MCF 10A (cell line): ENCODE measurements at regions of chr17 and their contacts with region 1.

Region 1: GRCh38 chr17:31318298-31318801 is 3.1 kb downstream of the EVI2A start:
- DNase-seq: peak; percentile 92
- H3K4me3 Mint-ChIP-seq: peak overlapping the region; percentile 65
- H3K27ac Mint-ChIP-seq: peak overlapping the region; percentile 90
- H3K4me1 Mint-ChIP-seq: peaks cover 27% of the 10 kb centered on the region
- H3K27me3 Mint-ChIP-seq: no peaks in the 10 kb centered on the region
- CTCF ChIP-seq: no peak

Region 2: GRCh38 chr17:31015639-31016038 is 302.7 kb before region 1 on chr17:
- CTCF ChIA-PET with region 1: no interaction called
- POLR2A ChIA-PET with region 1: no interaction called
- intact Hi-C with region 1: no loop called
- DNase-seq: no peak
- H3K4me3 Mint-ChIP-seq: no peak overlapping the region
- H3K27ac Mint-ChIP-seq: no peak overlapping the region
- H3K4me1 Mint-ChIP-seq: peaks cover 4% of the 10 kb centered on the region
- H3K27me3 Mint-ChIP-seq: no peaks in the 10 kb centered on the region
- CTCF ChIP-seq: no peak

Region 3: GRCh38 chr17:31269578-31269983 is 48.8 kb before region 1 on chr17:
- CTCF ChIA-PET with region 1: no interaction called
- POLR2A ChIA-PET with region 1: interaction called, 27 read pairs
- intact Hi-C with region 1: loop called (anchors 2 kb)
- DNase-seq: peak; percentile 89
- H3K4me3 Mint-ChIP-seq: peak overlapping the region; percentile 38
- H3K27ac Mint-ChIP-seq: peak overlapping the region; percentile 52
- H3K4me1 Mint-ChIP-seq: peaks cover 39% of the 10 kb centered on the region
- H3K27me3 Mint-ChIP-seq: no peaks in the 10 kb centered on the region
- CTCF ChIP-seq: no peak

Region 4: GRCh38 chr17:31339906-31340661 is 21.7 kb after region 1 on chr17:
- CTCF ChIA-PET with region 1: no interaction called
- POLR2A ChIA-PET with region 1: interaction called, 45 read pairs
- intact Hi-C with region 1: no loop called
- DNase-seq: peak; percentile 57
- H3K4me3 Mint-ChIP-seq: no peak overlapping the region
- H3K27ac Mint-ChIP-seq: peak overlapping the region; percentile 88
- H3K4me1 Mint-ChIP-seq: peaks cover 17% of the 10 kb centered on the region
- H3K27me3 Mint-ChIP-seq: no peaks in the 10 kb centered on the region
- CTCF ChIP-seq: no peak